ENCODE measurements at regions of chr5 and their contacts with region 1.

Region 1: GRCh38 chr5:115033861-115034260 is 135.8 kb downstream of the TRIM36 start:
- DNase-seq: no peak
- ATAC-seq: no peak
- H3K4me3 Mint-ChIP-seq: no peak overlapping the region
- H3K27ac Mint-ChIP-seq: no peak overlapping the region
- H3K4me1 Mint-ChIP-seq: no peaks in the 10 kb centered on the region
- H3K27me3 Mint-ChIP-seq: peaks cover 6% of the 10 kb centered on the region
- CTCF ChIP-seq: no peak

Region 2: DNA sequence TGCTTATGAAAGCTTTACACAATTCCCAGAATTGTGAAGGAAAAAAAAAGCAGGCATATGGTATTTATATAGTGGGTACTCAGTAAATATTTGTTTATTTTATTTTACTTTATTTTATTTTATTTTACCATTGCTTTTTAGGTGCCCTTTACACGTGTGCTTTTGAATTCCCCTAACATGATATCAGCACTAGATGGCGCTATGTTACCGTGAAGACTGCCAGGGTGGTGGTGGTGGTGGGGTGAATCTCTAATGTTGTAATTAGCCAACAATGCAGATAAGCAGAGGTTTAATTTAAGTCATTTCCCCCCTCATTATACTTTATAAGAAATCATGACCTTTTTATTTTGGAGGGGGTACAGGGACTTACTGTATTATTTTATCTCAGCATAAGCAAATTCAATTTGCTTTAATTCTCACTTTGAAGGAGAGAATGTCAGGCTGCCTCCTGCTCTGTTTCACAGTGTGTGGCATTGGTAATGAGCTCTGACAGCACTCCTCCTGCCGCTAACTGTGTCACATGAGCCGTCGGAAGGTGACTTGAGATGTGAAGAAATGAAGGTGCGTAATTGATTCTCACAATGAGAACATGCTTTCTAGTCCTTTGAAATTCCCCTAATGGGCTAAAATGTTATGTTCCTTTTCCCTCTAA is 1354.8 kb before region 1 on chr5:
- CTCF ChIA-PET with region 1: no interaction called
- POLR2A ChIA-PET with region 1: no interaction called
- intact Hi-C with region 1: loop called (anchors 5 kb)
- DNase-seq: no peak
- ATAC-seq: no peak
- H3K4me3 Mint-ChIP-seq: no peak overlapping the region
- H3K27ac Mint-ChIP-seq: no peak overlapping the region
- H3K4me1 Mint-ChIP-seq: no peaks in the 10 kb centered on the region
- H3K27me3 Mint-ChIP-seq: no peaks in the 10 kb centered on the region
- CTCF ChIP-seq: no peak

Region 3: DNA sequence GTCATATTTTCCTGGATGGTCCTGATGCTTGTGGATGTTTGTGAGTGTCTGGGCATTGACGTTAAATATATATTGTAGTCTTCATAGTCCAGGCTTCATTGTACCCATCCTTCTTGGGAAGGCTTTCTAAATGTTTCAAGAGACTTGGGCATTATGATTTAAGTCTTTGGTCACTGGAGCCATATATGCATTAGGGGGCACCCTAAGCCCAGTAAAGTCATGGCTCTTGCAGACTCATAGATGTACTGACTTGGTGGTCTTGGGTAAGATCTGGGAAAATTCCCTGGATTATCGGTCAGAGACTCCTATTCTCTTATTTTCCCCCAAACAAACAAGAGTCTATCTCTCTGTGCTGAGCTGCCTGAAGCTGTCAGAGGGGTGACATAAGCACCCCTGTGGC is 135.3 kb before region 1 on chr5:
- CTCF ChIA-PET with region 1: no interaction called
- POLR2A ChIA-PET with region 1: no interaction called
- intact Hi-C with region 1: loop called (anchors 5 kb)
- DNase-seq: no peak
- ATAC-seq: no peak
- H3K4me3 Mint-ChIP-seq: no peak overlapping the region
- H3K27ac Mint-ChIP-seq: no peak overlapping the region
- H3K4me1 Mint-ChIP-seq: no peaks in the 10 kb centered on the region
- H3K27me3 Mint-ChIP-seq: no peaks in the 10 kb centered on the region
- CTCF ChIP-seq: no peak

Region 4: GRCh38 chr5:115109840-115110239 is 76.0 kb after region 1 on chr5:
- CTCF ChIA-PET with region 1: no interaction called
- POLR2A ChIA-PET with region 1: no interaction called
- intact Hi-C with region 1: no loop called
- DNase-seq: no peak
- ATAC-seq: no peak
- H3K4me3 Mint-ChIP-seq: no peak overlapping the region
- H3K27ac Mint-ChIP-seq: no peak overlapping the region
- H3K4me1 Mint-ChIP-seq: no peaks in the 10 kb centered on the region
- H3K27me3 Mint-ChIP-seq: peaks cover 38% of the 10 kb centered on the region
- CTCF ChIP-seq: no peak

Region 5: DNA sequence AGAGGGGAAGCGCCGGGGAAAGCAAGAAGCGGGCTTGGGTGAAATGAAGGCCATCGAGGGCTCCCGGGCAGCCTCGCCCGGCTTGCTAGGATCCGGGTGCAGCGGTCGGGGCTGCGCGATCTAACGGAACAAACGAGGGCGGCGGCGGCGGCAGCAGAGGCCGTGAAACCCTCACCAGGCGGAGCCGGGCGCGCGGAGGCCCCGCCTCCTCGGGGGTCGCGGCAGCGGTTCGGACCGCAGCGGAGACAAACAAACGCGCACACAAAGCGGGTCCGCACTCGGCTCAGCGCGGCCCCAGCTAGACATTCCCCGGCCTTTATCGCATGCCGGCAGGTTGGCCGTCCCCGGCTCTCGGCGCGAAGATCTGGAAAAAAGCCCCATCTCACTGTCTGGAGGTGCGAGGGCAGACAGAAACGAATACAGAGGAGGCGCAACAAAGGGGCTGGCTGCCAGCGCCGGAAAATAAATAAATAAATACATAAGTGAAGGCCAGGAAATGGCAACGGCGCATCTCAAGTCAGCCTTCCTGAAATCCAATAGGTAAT is 146.4 kb after region 1 on chr5:
- CTCF ChIA-PET with region 1: no interaction called
- POLR2A ChIA-PET with region 1: no interaction called
- intact Hi-C with region 1: no loop called
- DNase-seq: peak; percentile 49
- ATAC-seq: peak; percentile 79
- H3K4me3 Mint-ChIP-seq: peak overlapping the region; percentile 87
- H3K27ac Mint-ChIP-seq: no peak overlapping the region
- H3K4me1 Mint-ChIP-seq: peaks cover 11% of the 10 kb centered on the region
- H3K27me3 Mint-ChIP-seq: peaks cover 74% of the 10 kb centered on the region
- CTCF ChIP-seq: no peak

Region 6: DNA sequence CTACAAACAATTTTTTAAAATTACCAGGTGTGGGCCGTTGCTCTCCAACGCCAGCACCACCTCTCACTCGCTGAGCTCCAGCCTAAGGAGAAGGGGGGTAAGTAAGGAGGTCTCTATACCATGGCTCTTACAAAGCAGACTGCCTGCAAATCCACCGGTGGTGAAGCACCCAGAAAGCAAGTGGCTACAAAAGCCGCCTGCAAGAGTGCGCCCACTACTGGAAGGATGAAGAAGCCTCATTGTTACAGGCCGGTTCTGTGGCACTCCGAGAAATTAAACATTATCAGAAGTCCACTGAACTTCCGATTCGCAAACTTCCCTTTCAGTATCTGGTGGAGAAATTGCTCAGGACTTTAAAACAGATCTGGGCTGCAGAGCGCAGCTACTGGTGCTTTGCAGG is 736.6 kb after region 1 on chr5:
- CTCF ChIA-PET with region 1: no interaction called
- POLR2A ChIA-PET with region 1: no interaction called
- intact Hi-C with region 1: no loop called
- DNase-seq: no peak
- ATAC-seq: no peak
- H3K4me3 Mint-ChIP-seq: no peak overlapping the region
- H3K27ac Mint-ChIP-seq: no peak overlapping the region
- H3K4me1 Mint-ChIP-seq: peaks cover 4% of the 10 kb centered on the region
- H3K27me3 Mint-ChIP-seq: peaks cover 4% of the 10 kb centered on the region
- CTCF ChIP-seq: no peak

Measured in activated B cell treated with CpG ODN at 0.5 μM for 24 hours (primary cell).